ENCODE measurements at regions of chr7 and their contacts with region 1.

Region 1: DNA sequence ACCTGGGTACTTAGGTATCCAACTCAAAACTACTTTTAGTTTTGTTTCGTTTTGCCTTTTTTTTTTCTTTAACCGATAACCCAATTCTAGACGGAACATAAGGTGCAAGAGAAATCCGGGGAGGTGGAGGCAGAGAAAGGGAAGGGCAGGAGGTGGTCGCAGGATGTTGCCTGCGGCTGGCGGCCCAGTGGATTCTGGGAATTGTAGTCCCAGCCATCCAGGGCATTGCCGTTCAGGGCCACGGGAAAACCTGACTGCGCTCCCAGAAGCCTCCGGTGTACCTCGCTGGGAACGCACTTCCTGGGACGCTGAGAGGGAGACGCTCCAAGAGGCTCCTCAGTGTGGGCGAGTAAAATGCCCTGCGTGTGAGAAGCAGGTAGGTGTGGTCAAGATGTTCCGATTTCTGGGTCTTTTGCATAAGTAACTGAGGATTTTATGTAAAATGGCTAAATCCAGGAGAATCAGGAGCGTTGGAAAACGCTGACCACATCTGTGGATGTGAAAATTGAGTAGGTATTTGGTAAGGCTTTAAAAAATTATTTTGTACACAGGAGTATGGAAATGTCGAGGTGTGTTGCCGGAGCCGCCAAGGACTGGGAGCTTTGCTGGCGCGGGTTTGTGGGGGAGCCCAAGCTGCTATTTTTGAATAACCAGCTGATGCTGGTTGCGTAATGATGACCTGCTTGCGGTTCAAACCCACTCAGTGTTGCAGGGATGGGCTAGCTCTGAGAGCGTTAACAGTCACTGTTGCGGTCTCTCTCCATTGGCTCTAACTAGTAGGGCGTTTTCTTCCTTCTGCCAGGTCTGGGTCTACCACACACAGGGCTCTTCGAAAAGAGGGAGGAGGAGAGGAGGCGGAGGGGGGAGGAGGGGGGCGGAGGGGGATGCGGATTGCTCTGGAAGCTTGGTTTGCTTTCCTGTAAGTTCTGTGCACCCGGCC is at the start of gene CLDN12:
- DNase-seq: peak; percentile 76
- ATAC-seq: peak; percentile 99
- H3K4me3 ChIP-seq: peak within 1 kb of the TSS; percentile 76
- H3K27ac ChIP-seq: peak within 1 kb of the TSS; percentile 88
- H3K4me1 ChIP-seq: no peaks in the 10 kb centered on the region
- H3K27me3 ChIP-seq: no peaks in the 10 kb centered on the region
- CTCF ChIP-seq: no peak
- EP300 ChIP-seq: peak; percentile 93 to 98; a peak in 3 of 4 replicates
- POLR2A ChIP-seq: peak; percentile 47
- RAD21 ChIP-seq: no peak
- polyA plus RNA-seq, gene CLDN12: 3.1 to 5.6 TPM

Region 2: GRCh38 chr7:90346336-90347125 is 56.9 kb before region 1 on chr7 and contains the start of gene GTPBP10:
- CTCF ChIA-PET with region 1: interaction called, 9 read pairs
- POLR2A ChIA-PET with region 1: interaction called, 8 read pairs
- RAD21 ChIA-PET with region 1: interaction called, 3 read pairs
- SMC1A ChIA-PET with region 1: interaction called, 5 read pairs
- in situ Hi-C with region 1: loop called (anchors 5 kb)
- intact Hi-C with region 1: loop called (anchors 1 kb)
- DNase-seq: peak; percentile 88
- ATAC-seq: peak; percentile 92
- H3K4me3 ChIP-seq: peak within 1 kb of the TSS; percentile 92
- H3K27ac ChIP-seq: peak within 1 kb of the TSS; percentile 99
- H3K4me1 ChIP-seq: peaks cover 6% of the 10 kb centered on the region; the same call in 1 of the 2 replicates
- H3K27me3 ChIP-seq: no peaks in the 10 kb centered on the region
- CTCF ChIP-seq: peak; percentile 82 to 87 (median 85)
- EP300 ChIP-seq: peak in 1 of 2 experiments; percentile 64; a peak in 1 of 4 replicates
- POLR2A ChIP-seq: peak; percentile 99
- RAD21 ChIP-seq: 0 out of 2 replicates have a peak, but pooled peaks have one; percentile 8
- polyA plus RNA-seq, gene GTPBP10: 29.4 to 32.5 TPM